ENCODE measurements at regions of chr6 and their contacts with region 1.

Region 1: GRCh38 chr6:43516697-43517504 is at the starts of genes POLR1C and YIPF3:
- DNase-seq: peak; percentile 91 to 98 (median 96)
- ATAC-seq: peak; percentile 96
- H3K4me3 ChIP-seq: peak within 1 kb of the TSS; percentile 100
- H3K4me3 Mint-ChIP-seq: no peak within 1 kb of the TSS
- H3K27ac ChIP-seq: peak within 1 kb of the TSS; percentile 81 to 90
- H3K27ac Mint-ChIP-seq: no peak within 1 kb of the TSS
- H3K4me1 ChIP-seq: peaks cover 43% of the 10 kb centered on the region
- H3K4me1 Mint-ChIP-seq: peaks cover 33% of the 10 kb centered on the region
- H3K27me3 ChIP-seq: no peaks in the 10 kb centered on the region
- H3K27me3 Mint-ChIP-seq: no peaks in the 10 kb centered on the region
- CTCF ChIP-seq: no peak
- total RNA-seq, gene POLR1C: 46.6 to 47.8 TPM
- total RNA-seq, gene YIPF3: 36.5 to 37.9 TPM

Region 2: DNA sequence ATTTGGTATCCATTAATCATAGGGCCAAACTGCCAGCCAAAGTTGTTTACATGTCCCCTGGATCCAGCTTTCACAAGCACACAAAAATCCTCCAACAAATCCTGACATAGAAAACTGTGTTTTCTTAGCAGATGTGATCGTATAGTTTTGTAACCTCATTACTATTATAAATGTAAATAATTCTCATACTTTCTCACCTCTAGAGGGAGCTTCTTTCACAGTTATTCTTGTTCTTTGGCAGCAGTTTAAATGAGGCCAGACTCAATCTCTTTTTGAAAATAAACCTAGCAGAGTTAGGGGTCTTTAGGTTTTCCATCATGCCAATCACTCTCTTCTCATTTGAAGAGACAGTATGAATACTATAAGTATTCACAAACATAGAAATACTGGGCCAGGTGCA is 130.4 kb before region 1 on chr6:
- CTCF ChIA-PET with region 1: no interaction called
- POLR2A ChIA-PET with region 1: interaction called, 10 read pairs
- intact Hi-C with region 1: no loop called
- DNase-seq: peak in 3 of 14 experiments; percentile 44 to 57 (median 50)
- ATAC-seq: no peak
- H3K4me3 ChIP-seq: no peak overlapping the region
- H3K4me3 Mint-ChIP-seq: peak overlapping the region; percentile 22
- H3K27ac ChIP-seq: no peak overlapping the region
- H3K27ac Mint-ChIP-seq: peak overlapping the region; percentile 93
- H3K4me1 ChIP-seq: peaks cover 55% of the 10 kb centered on the region
- H3K4me1 Mint-ChIP-seq: peaks cover 75% of the 10 kb centered on the region
- H3K27me3 ChIP-seq: no peaks in the 10 kb centered on the region
- H3K27me3 Mint-ChIP-seq: no peaks in the 10 kb centered on the region
- CTCF ChIP-seq: peak; percentile 54

Region 3: GRCh38 chr6:43575772-43576551 is 59.1 kb after region 1 on chr6 and contains the starts of genes POLH and XPO5:
- CTCF ChIA-PET with region 1: no interaction called
- POLR2A ChIA-PET with region 1: no interaction called
- intact Hi-C with region 1: loop called in 1 of 2 experiments (anchors 1 kb)
- DNase-seq: peak; percentile 75 to 97 (median 89)
- ATAC-seq: peak; percentile 95
- H3K4me3 ChIP-seq: peak within 1 kb of the TSS; percentile 100
- H3K4me3 Mint-ChIP-seq: peak within 1 kb of the TSS; percentile 92
- H3K27ac ChIP-seq: peak within 1 kb of the TSS; percentile 58 to 75
- H3K27ac Mint-ChIP-seq: peak within 1 kb of the TSS; percentile 90
- H3K4me1 ChIP-seq: peaks cover 25% of the 10 kb centered on the region
- H3K4me1 Mint-ChIP-seq: peaks cover 31% of the 10 kb centered on the region
- H3K27me3 ChIP-seq: no peaks in the 10 kb centered on the region
- H3K27me3 Mint-ChIP-seq: no peaks in the 10 kb centered on the region
- CTCF ChIP-seq: no peak
- total RNA-seq, gene POLH: 4.2 to 4.4 TPM
- total RNA-seq, gene XPO5: 26.8 to 31.2 TPM